Panc1 (cell line): ENCODE measurements at regions of chr6 and their contacts with region 1.

Region 1: GRCh38 chr6:87220997-87221396 is 65.6 kb downstream of the ZNF292 start:
- DNase-seq: no peak
- ATAC-seq: no peak
- H3K4me3 ChIP-seq: no peak overlapping the region
- H3K27ac ChIP-seq: no peak overlapping the region
- H3K4me1 ChIP-seq: no peaks in the 10 kb centered on the region
- H3K27me3 ChIP-seq: no peaks in the 10 kb centered on the region
- CTCF ChIP-seq: no peak

Region 2: DNA sequence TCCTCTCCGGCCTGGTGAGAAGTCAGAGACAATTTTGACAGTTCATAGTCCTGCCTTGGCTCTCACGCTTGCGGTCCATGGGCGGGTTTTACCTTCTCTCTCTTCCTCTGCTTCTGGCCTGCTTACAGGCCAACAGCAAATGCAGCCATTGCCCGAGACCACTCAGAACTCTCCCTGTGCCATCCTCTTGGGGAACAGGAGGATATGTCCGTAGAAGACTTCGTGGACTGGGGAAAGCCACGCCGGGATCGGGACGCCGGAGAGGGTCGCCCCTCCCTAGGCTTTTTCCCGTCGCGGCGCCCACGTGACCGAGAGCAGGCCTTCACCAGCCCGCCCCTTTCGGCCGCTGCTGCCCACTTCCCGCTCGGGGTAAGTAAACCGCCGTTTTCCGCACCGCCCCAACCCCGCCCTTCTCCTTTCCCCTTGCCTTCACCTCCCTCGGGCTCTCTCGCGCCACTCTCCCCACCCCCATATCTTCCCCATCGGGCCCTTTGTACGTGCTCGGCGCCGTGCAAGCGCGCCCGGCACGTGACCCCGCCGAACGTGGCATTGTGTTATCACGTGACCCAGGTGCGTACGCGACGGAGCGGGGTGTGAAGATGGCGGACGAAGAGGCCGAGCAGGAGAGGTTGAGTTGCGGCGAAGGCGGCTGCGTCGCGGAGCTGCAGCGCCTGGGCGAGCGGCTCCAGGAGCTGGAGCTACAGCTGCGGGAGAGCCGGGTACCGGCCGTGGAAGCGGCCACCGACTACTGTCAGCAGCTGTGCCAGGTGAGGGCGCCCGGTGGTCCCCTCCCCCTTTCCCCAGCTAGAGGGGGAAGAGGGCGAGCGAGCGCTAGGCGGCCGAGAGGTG is 65.8 kb before region 1 on chr6 and contains the start of gene ZNF292:
- CTCF ChIA-PET with region 1: no interaction called
- POLR2A ChIA-PET with region 1: no interaction called
- in situ Hi-C with region 1: no loop called
- intact Hi-C with region 1: loop called (anchors 10 kb)
- DNase-seq: peak; percentile 86
- ATAC-seq: peak; percentile 90
- H3K4me3 ChIP-seq: peak within 1 kb of the TSS; percentile 78 to 91
- H3K27ac ChIP-seq: peak within 1 kb of the TSS; percentile 97
- H3K4me1 ChIP-seq: peaks cover 25% of the 10 kb centered on the region
- H3K27me3 ChIP-seq: no peaks in the 10 kb centered on the region
- CTCF ChIP-seq: no peak
- total RNA-seq, gene ZNF292: 38.2 TPM